T-cell (primary cell): ENCODE measurements at regions of chr11 and their contacts with region 1.

Region 1: GRCh38 chr11:58788355-58789023 is 56.0 kb downstream of the GLYATL2 start:
- DNase-seq: peak in 33 of 35 experiments; percentile 1 to 62 (median 28)
- ATAC-seq: peak; percentile 78 to 87 (median 82)
- H3K4me3 ChIP-seq: no peak overlapping the region
- H3K4me3 Mint-ChIP-seq: no peak overlapping the region
- H3K27ac ChIP-seq: no peak overlapping the region
- H3K27ac Mint-ChIP-seq: no peak overlapping the region
- H3K4me1 ChIP-seq: no peaks in the 10 kb centered on the region
- H3K4me1 Mint-ChIP-seq: peaks cover 2 to 4% (median 2%) of the 10 kb centered on the region in 3 donors
- H3K27me3 ChIP-seq: peaks cover 0 to 7% of the 10 kb centered on the region in 2 experiments
- H3K27me3 Mint-ChIP-seq: peaks cover 7 to 14% of the 10 kb centered on the region in 2 donors

Region 2: GRCh38 chr11:58654079-58654907 is 134.2 kb before region 1 on chr11:
- CTCF ChIA-PET with region 1: interaction called, 4 to 47 read pairs
- POLR2A ChIA-PET with region 1: interaction called in 1 of 2 experiments, 4 read pairs
- DNase-seq: peak; percentile 51 to 85 (median 71)
- ATAC-seq: peak; percentile 92 to 97 (median 96)
- H3K4me3 ChIP-seq: no peak overlapping the region
- H3K4me3 Mint-ChIP-seq: no peak overlapping the region
- H3K27ac ChIP-seq: no peak overlapping the region
- H3K27ac Mint-ChIP-seq: no peak overlapping the region
- H3K4me1 ChIP-seq: peaks cover 0 to 3% of the 10 kb centered on the region in 2 experiments
- H3K4me1 Mint-ChIP-seq: peaks cover 4 to 9% (median 5%) of the 10 kb centered on the region in 3 donors
- H3K27me3 ChIP-seq: no peaks in the 10 kb centered on the region
- H3K27me3 Mint-ChIP-seq: peaks cover 0 to 4% of the 10 kb centered on the region in 2 donors

Region 3: GRCh38 chr11:58691675-58692074 is 96.8 kb before region 1 on chr11:
- CTCF ChIA-PET with region 1: no interaction called
- POLR2A ChIA-PET with region 1: interaction called in 1 of 2 experiments, 21 read pairs
- DNase-seq: no peak
- ATAC-seq: no peak
- H3K4me3 ChIP-seq: no peak overlapping the region
- H3K4me3 Mint-ChIP-seq: no peak overlapping the region
- H3K27ac ChIP-seq: no peak overlapping the region
- H3K27ac Mint-ChIP-seq: no peak overlapping the region
- H3K4me1 ChIP-seq: no peaks in the 10 kb centered on the region
- H3K4me1 Mint-ChIP-seq: peaks cover 0 to 6% (median 0%) of the 10 kb centered on the region in 3 donors
- H3K27me3 ChIP-seq: no peaks in the 10 kb centered on the region
- H3K27me3 Mint-ChIP-seq: no peaks in the 10 kb centered on the region